ENCODE measurements at regions of chr19 and their contacts with region 1.

Region 1: GRCh38 chr19:52007806-52008557 is at the start of gene ZNF615:
- DNase-seq: peak; percentile 86 to 90
- H3K4me3 ChIP-seq: peak within 1 kb of the TSS; percentile 89
- H3K4me3 Mint-ChIP-seq: peak within 1 kb of the TSS; percentile 96
- H3K27ac Mint-ChIP-seq: peak within 1 kb of the TSS; percentile 98
- H3K4me1 ChIP-seq: no peaks in the 10 kb centered on the region
- H3K4me1 Mint-ChIP-seq: peaks cover 10% of the 10 kb centered on the region
- H3K27me3 ChIP-seq: no peaks in the 10 kb centered on the region
- H3K27me3 Mint-ChIP-seq: no peaks in the 10 kb centered on the region
- CTCF ChIP-seq: no peak
- total RNA-seq, gene ZNF615: 5.2 and 7.1 TPM in 2 replicates

Region 2: DNA sequence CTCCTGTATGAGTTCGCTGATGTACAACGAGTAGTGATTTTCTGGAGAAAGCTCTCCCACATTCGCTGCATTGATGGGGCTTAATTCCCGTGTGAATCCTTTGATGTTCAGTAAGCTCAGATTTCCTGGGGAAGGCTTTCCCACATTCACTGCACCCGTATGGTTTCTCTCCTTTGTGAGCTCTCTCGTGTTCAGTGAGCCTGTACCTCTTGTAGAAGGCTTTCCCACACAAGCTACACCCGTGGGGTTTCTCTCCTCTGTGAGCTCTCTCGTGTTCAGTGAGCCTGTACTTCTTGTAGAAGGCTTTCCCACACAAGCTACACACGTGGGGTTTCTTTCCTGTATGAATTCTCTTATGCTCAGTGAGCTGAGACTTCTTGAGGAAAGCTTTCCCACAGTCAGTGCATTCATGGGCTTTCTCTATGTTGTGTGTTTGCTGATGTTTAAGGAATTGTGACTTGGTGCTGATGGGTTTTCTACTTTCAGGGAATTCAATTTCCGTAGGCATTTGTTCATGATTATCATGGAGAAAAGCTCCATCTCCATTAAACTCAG is 116.7 kb before region 1 on chr19:
- CTCF ChIA-PET with region 1: no interaction called
- POLR2A ChIA-PET with region 1: no interaction called
- intact Hi-C with region 1: no loop called
- DNase-seq: no peak
- H3K4me3 ChIP-seq: no peak overlapping the region
- H3K4me3 Mint-ChIP-seq: no peak overlapping the region
- H3K27ac Mint-ChIP-seq: no peak overlapping the region
- H3K4me1 ChIP-seq: 0 out of 2 replicates have a peak, but pooled peaks cover 3% of the 10 kb centered on the region
- H3K4me1 Mint-ChIP-seq: no peaks in the 10 kb centered on the region
- H3K27me3 ChIP-seq: no peaks in the 10 kb centered on the region
- H3K27me3 Mint-ChIP-seq: no peaks in the 10 kb centered on the region
- CTCF ChIP-seq: no peak

Region 3: DNA sequence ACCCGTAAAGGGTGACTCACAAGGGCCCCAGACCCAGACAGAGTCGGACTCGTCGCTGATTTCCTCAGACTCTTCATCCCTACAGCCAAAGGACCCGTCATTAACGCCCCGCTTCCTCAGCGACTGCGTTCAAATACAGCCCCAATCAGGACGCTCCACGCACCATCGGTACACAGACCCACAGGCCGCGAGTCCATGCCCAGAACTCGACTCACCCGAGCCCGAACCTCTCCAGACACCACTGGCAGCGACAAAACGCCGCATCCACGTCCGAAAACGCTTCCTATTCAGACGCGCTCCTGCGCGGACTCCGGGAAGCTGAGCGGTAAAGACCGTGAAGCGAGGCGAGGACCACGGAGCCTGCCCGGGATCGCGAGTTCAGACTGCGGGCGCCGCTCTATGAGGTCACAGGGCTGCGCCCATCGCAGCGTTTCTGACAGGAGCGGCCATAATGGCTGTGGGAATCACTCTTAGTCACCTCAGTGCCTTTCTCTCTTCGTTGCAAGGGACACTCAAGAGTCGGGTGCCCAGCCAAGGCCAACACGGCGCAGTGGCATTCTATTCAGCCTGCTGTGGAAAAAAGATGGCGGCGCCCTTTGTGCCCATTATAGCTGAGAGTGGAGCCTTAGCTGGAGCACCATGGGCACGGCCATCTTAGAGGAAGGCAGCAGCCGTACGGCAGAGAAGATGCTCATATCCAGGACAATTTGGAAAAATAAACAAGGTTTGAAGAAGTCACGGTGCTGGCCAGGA is 20.2 kb after region 1 on chr19 and contains the start of gene ZNF614:
- CTCF ChIA-PET with region 1: no interaction called
- POLR2A ChIA-PET with region 1: interaction called, 5 read pairs
- intact Hi-C with region 1: loop called (anchors 1 kb)
- DNase-seq: peak; percentile 87 to 90
- H3K4me3 ChIP-seq: peak within 1 kb of the TSS; percentile 79
- H3K4me3 Mint-ChIP-seq: peak within 1 kb of the TSS; percentile 92
- H3K27ac Mint-ChIP-seq: peak within 1 kb of the TSS; percentile 93
- H3K4me1 ChIP-seq: peaks cover 32% of the 10 kb centered on the region
- H3K4me1 Mint-ChIP-seq: peaks cover 17% of the 10 kb centered on the region
- H3K27me3 ChIP-seq: no peaks in the 10 kb centered on the region
- H3K27me3 Mint-ChIP-seq: no peaks in the 10 kb centered on the region
- CTCF ChIP-seq: no peak
- total RNA-seq, gene ZNF614: 7.8 and 8.7 TPM in 2 replicates